ENCODE measurements at regions of chr5 and their contacts with region 1.

Region 1: GRCh38 chr5:132410451-132411381 is 41.2 kb downstream of the SLC22A5 start:
- DNase-seq: peak; percentile 86 to 91 (median 87)
- H3K4me3 ChIP-seq: peak overlapping the region; percentile 77
- H3K27ac ChIP-seq: peak overlapping the region; percentile 98 to 99
- H3K4me1 ChIP-seq: peaks cover 13% of the 10 kb centered on the region
- H3K27me3 ChIP-seq: no peaks in the 10 kb centered on the region
- CTCF ChIP-seq: peak; percentile 34 to 59 (median 59)
- EP300 ChIP-seq: no peak
- POLR2A ChIP-seq: peak; percentile 65

Region 2: DNA sequence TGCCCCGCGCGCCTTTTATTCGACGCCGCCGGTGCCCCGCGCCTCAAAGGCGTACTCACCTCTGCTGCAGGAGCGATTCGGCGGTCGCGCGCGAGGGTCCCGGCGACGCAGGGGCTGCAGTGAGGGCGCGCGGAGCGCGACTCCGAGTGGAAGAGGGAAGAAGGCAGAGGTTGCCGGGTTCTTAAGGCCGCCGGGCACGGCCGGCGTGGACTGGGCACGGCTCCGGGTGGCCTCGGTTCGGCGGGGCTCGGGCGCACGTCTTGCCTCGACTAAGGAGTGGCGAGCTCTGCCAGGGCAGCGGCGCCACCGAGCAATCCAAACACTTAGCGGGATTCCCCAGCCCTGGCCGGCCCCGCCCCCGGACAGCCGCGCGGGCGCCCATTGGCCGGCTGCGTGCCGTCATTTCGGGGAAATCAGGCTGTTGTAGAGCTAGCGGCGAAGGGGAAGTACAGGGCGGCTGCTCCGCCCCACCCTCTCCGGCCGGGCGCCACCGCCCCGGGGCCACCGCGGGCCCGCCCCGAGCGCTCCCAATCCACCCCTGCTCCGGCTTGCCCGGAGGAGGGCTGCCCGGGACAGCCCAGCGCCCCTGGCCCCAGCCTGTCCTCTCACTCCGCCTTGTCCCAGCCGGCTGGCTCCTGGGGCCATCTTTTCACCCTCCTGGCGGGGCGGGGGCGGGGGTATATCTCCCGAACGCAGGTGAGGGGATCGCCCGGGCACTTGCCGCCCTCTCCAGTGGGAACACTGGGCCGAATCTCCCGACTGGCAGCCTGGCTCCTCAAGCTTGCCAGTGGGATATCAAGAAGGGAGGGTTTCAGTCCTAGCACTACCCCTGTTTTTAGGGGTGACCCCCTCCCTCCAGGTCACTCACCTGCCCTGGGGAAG is 80.0 kb after region 1 on chr5 and contains the start of gene IRF1:
- intact Hi-C with region 1: loop called in 3 of 4 experiments (anchors 2 to 10 kb)
- DNase-seq: peak; percentile 95 to 97 (median 97)
- H3K4me3 ChIP-seq: peak within 1 kb of the TSS; percentile 93
- H3K27ac ChIP-seq: peak within 1 kb of the TSS; percentile 86 to 95
- H3K4me1 ChIP-seq: peaks cover 16% of the 10 kb centered on the region
- H3K27me3 ChIP-seq: no peaks in the 10 kb centered on the region
- CTCF ChIP-seq: peak in 1 of 3 donors; percentile 31
- EP300 ChIP-seq: peak; percentile 75
- POLR2A ChIP-seq: peak; percentile 90
- total RNA-seq, gene IRF1: 17.3 to 126 (median 31.1) TPM

Measured in ovary (tissue), 10 donors.